Activated T-helper 2 cell treated with anti-CD3 and anti-CD28 coated beads, Interferon-gamma antibody, Interleukin-2, Interleukin-4, amounts not matched to agents 10 μg/mL and 5 μg/mL and 100 μg/mL, durations not matched to agents 14 hours and 24 hours and 36 hours (primary cell): ENCODE measurements at regions of chr21 and their contacts with region 1.

Region 1: GRCh38 chr21:35528116-35529042 is 479.3 kb upstream of the RUNX1 start:
- DNase-seq: peak; percentile 26
- H3K4me3 Mint-ChIP-seq: peak overlapping the region; percentile 85
- H3K27ac Mint-ChIP-seq: peak overlapping the region; percentile 95
- H3K4me1 Mint-ChIP-seq: peaks cover 53% of the 10 kb centered on the region
- H3K27me3 Mint-ChIP-seq: no peaks in the 10 kb centered on the region

Region 2: DNA sequence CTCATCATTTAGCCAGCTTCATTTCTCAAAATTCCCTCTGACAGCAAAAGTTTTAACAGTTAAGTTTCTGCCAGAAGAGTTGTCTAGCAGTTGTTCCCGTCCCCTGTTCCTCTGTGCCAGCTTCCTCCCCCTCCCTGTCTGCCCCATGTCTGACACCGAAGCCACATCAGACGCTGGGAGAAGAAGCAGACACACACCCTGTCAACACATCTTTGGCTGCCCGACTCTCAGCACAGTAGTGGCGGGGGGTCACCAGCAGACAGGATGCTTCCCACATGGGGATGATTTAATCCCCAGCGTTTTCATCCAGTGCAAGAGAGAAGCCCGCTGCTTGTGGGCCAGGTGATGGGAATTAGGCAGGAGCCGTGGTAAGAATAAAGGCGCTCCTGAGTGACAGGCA is 99.9 kb before region 1 on chr21:
- intact Hi-C with region 1: loop called (anchors 5 kb)
- DNase-seq: no peak
- H3K4me3 Mint-ChIP-seq: no peak overlapping the region
- H3K27ac Mint-ChIP-seq: peak overlapping the region; percentile 25
- H3K4me1 Mint-ChIP-seq: peaks cover 23% of the 10 kb centered on the region
- H3K27me3 Mint-ChIP-seq: peaks cover 5% of the 10 kb centered on the region

Region 3: GRCh38 chr21:35508139-35508888 is 20.1 kb before region 1 on chr21:
- intact Hi-C with region 1: loop called (anchors 1 kb)
- DNase-seq: no peak
- H3K4me3 Mint-ChIP-seq: no peak overlapping the region
- H3K27ac Mint-ChIP-seq: no peak overlapping the region
- H3K4me1 Mint-ChIP-seq: peaks cover 41% of the 10 kb centered on the region
- H3K27me3 Mint-ChIP-seq: no peaks in the 10 kb centered on the region

Region 4: GRCh38 chr21:35578350-35578782 is 50.0 kb after region 1 on chr21:
- intact Hi-C with region 1: loop called (anchors 1 kb)
- DNase-seq: no peak
- H3K4me3 Mint-ChIP-seq: no peak overlapping the region
- H3K27ac Mint-ChIP-seq: peak overlapping the region; percentile 71
- H3K4me1 Mint-ChIP-seq: peaks cover 26% of the 10 kb centered on the region
- H3K27me3 Mint-ChIP-seq: peaks cover 5% of the 10 kb centered on the region